Naive thymus-derived CD4-positive, alpha-beta T cell (primary cell): ENCODE measurements at regions of chr18 and their contacts with region 1.

Region 1: GRCh38 chr18:26090130-26091046 is at the start of gene SS18:
- DNase-seq: peak; percentile 79 to 90 (median 87)
- ATAC-seq: peak; percentile 91
- H3K4me3 ChIP-seq: peak within 1 kb of the TSS; percentile 95
- H3K4me3 Mint-ChIP-seq: peak within 1 kb of the TSS; percentile 94 to 99 (median 97)
- H3K27ac ChIP-seq: peak within 1 kb of the TSS; percentile 96
- H3K27ac Mint-ChIP-seq: peak within 1 kb of the TSS; percentile 95 to 99 (median 98)
- H3K4me1 ChIP-seq: peaks cover 9 to 13% of the 10 kb centered on the region in 2 donors
- H3K4me1 Mint-ChIP-seq: peaks cover 23 to 44% (median 38%) of the 10 kb centered on the region in 7 donors
- H3K27me3 ChIP-seq: no peaks in the 10 kb centered on the region
- H3K27me3 Mint-ChIP-seq: no peaks in the 10 kb centered on the region
- total RNA-seq, gene SS18: 50.9 to 85.8 (median 77.3) TPM

Region 2: GRCh38 chr18:24397694-24398365 is 1692.6 kb before region 1 on chr18 and contains the start of gene OSBPL1A:
- CTCF ChIA-PET with region 1: no interaction called
- POLR2A ChIA-PET with region 1: no interaction called
- intact Hi-C with region 1: loop called in 1 of 2 experiments (anchors 5 kb)
- DNase-seq: peak; percentile 50 to 68 (median 63)
- ATAC-seq: peak; percentile 95
- H3K4me3 ChIP-seq: peak within 1 kb of the TSS; percentile 71
- H3K4me3 Mint-ChIP-seq: peak within 1 kb of the TSS; percentile 82 to 91 (median 88)
- H3K27ac ChIP-seq: no peak within 1 kb of the TSS
- H3K27ac Mint-ChIP-seq: peak within 1 kb of the TSS in 6 of 9 donors; percentile 7 to 84 (median 33)
- H3K4me1 ChIP-seq: peaks cover 0 to 6% of the 10 kb centered on the region in 2 donors
- H3K4me1 Mint-ChIP-seq: peaks cover 0 to 24% (median 12%) of the 10 kb centered on the region in 7 donors
- H3K27me3 ChIP-seq: no peaks in the 10 kb centered on the region
- H3K27me3 Mint-ChIP-seq: peaks cover 5 to 40% (median 10%) of the 10 kb centered on the region in 5 donors
- total RNA-seq, gene OSBPL1A: 1.8 to 7.7 (median 4.3) TPM

Region 3: GRCh38 chr18:25112821-25113434 is 977.5 kb before region 1 on chr18:
- CTCF ChIA-PET with region 1: no interaction called
- POLR2A ChIA-PET with region 1: no interaction called
- intact Hi-C with region 1: no loop called
- DNase-seq: no peak
- ATAC-seq: no peak
- H3K4me3 ChIP-seq: no peak overlapping the region
- H3K4me3 Mint-ChIP-seq: no peak overlapping the region
- H3K27ac ChIP-seq: no peak overlapping the region
- H3K27ac Mint-ChIP-seq: no peak overlapping the region
- H3K4me1 ChIP-seq: no peaks in the 10 kb centered on the region
- H3K4me1 Mint-ChIP-seq: no peaks in the 10 kb centered on the region
- H3K27me3 ChIP-seq: no peaks in the 10 kb centered on the region
- H3K27me3 Mint-ChIP-seq: peaks cover 0 to 13% (median 0%) of the 10 kb centered on the region in 5 donors

Region 4: GRCh38 chr18:25946540-25946939 is 143.8 kb before region 1 on chr18:
- CTCF ChIA-PET with region 1: no interaction called
- POLR2A ChIA-PET with region 1: no interaction called
- intact Hi-C with region 1: no loop called
- DNase-seq: no peak
- ATAC-seq: no peak
- H3K4me3 ChIP-seq: no peak overlapping the region
- H3K4me3 Mint-ChIP-seq: no peak overlapping the region
- H3K27ac ChIP-seq: no peak overlapping the region
- H3K27ac Mint-ChIP-seq: no peak overlapping the region
- H3K4me1 ChIP-seq: no peaks in the 10 kb centered on the region
- H3K4me1 Mint-ChIP-seq: no peaks in the 10 kb centered on the region
- H3K27me3 ChIP-seq: no peaks in the 10 kb centered on the region
- H3K27me3 Mint-ChIP-seq: peaks cover 0 to 7% (median 4%) of the 10 kb centered on the region in 5 donors

Region 5: DNA sequence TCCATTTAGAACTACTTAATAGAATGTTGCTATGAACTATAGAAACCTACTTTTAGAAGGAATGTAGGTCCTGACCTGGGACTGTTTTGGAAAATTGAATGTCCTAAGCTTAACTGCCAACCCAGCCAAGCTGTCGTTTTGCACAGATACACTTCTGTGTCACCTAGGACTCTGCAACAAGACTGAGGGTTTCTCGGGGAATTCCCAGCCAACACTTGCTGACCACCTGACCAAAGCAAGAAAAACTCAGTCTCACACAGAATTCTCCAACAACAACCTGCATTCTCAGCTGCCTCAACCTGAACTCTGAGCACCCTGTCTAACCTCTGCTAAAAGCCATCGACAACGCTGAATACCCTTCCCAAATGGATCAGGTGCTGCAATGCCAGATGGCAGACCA is 128.2 kb before region 1 on chr18:
- CTCF ChIA-PET with region 1: no interaction called
- POLR2A ChIA-PET with region 1: no interaction called
- intact Hi-C with region 1: no loop called
- DNase-seq: no peak
- ATAC-seq: no peak
- H3K4me3 ChIP-seq: no peak overlapping the region
- H3K4me3 Mint-ChIP-seq: no peak overlapping the region
- H3K27ac ChIP-seq: no peak overlapping the region
- H3K27ac Mint-ChIP-seq: no peak overlapping the region
- H3K4me1 ChIP-seq: no peaks in the 10 kb centered on the region
- H3K4me1 Mint-ChIP-seq: peaks cover 0 to 1% (median 0%) of the 10 kb centered on the region in 7 donors
- H3K27me3 ChIP-seq: no peaks in the 10 kb centered on the region
- H3K27me3 Mint-ChIP-seq: peaks cover 12 to 23% (median 17%) of the 10 kb centered on the region in 5 donors

Region 6: GRCh38 chr18:26073758-26074157 is 16.6 kb before region 1 on chr18:
- CTCF ChIA-PET with region 1: no interaction called
- POLR2A ChIA-PET with region 1: no interaction called
- intact Hi-C with region 1: loop called (anchors 1 to 2 kb)
- DNase-seq: no peak
- ATAC-seq: no peak
- H3K4me3 ChIP-seq: no peak overlapping the region
- H3K4me3 Mint-ChIP-seq: no peak overlapping the region
- H3K27ac ChIP-seq: no peak overlapping the region
- H3K27ac Mint-ChIP-seq: no peak overlapping the region
- H3K4me1 ChIP-seq: no peaks in the 10 kb centered on the region
- H3K4me1 Mint-ChIP-seq: peaks cover 14 to 64% (median 40%) of the 10 kb centered on the region in 7 donors
- H3K27me3 ChIP-seq: no peaks in the 10 kb centered on the region
- H3K27me3 Mint-ChIP-seq: no peaks in the 10 kb centered on the region

Region 7: DNA sequence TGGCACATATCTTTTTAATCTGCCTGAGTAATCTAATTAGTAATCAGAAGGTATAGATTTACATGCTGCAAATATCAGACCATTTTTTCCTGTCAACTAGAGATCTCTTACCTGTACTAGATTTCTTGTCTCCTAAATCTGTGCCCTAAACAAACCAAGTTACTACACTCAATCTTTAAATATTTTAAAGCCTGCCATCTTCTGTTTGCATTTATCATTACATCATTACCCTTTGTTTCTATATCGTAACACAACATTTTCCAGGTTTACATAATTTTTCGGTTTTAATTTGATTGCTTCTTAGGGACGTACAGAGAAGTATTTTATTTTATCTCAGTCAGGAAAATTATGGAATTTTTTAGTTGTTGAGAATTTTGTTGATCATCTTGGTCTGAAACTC is 69.0 kb after region 1 on chr18:
- CTCF ChIA-PET with region 1: no interaction called
- POLR2A ChIA-PET with region 1: no interaction called
- intact Hi-C with region 1: loop called in 1 of 2 experiments (anchors 1 kb)
- DNase-seq: peak in 5 of 9 donors; percentile 7 to 37 (median 17)
- ATAC-seq: no peak
- H3K4me3 ChIP-seq: no peak overlapping the region
- H3K4me3 Mint-ChIP-seq: peak overlapping the region in 1 of 10 donors; percentile 2
- H3K27ac ChIP-seq: no peak overlapping the region
- H3K27ac Mint-ChIP-seq: no peak overlapping the region
- H3K4me1 ChIP-seq: no peaks in the 10 kb centered on the region
- H3K4me1 Mint-ChIP-seq: peaks cover 0 to 7% (median 2%) of the 10 kb centered on the region in 7 donors
- H3K27me3 ChIP-seq: no peaks in the 10 kb centered on the region
- H3K27me3 Mint-ChIP-seq: peaks cover 0 to 8% (median 0%) of the 10 kb centered on the region in 5 donors

Region 8: GRCh38 chr18:26215247-26215970 is 125.0 kb after region 1 on chr18:
- CTCF ChIA-PET with region 1: interaction called, 3 read pairs
- POLR2A ChIA-PET with region 1: interaction called, 5 read pairs
- intact Hi-C with region 1: loop called in 1 of 2 experiments (anchors 1 kb)
- DNase-seq: peak in 8 of 9 donors; percentile 25 to 93 (median 87)
- ATAC-seq: peak; percentile 98
- H3K4me3 ChIP-seq: no peak overlapping the region
- H3K4me3 Mint-ChIP-seq: peak overlapping the region; percentile 29 to 82 (median 60)
- H3K27ac ChIP-seq: peak overlapping the region; percentile 58
- H3K27ac Mint-ChIP-seq: peak overlapping the region; percentile 80 to 98 (median 91)
- H3K4me1 ChIP-seq: peaks cover 11 to 18% of the 10 kb centered on the region in 2 donors
- H3K4me1 Mint-ChIP-seq: peaks cover 19 to 50% (median 30%) of the 10 kb centered on the region in 7 donors
- H3K27me3 ChIP-seq: no peaks in the 10 kb centered on the region
- H3K27me3 Mint-ChIP-seq: no peaks in the 10 kb centered on the region

Region 9: GRCh38 chr18:26548429-26549262 is 458.3 kb after region 1 on chr18 and contains the start of gene KCTD1:
- CTCF ChIA-PET with region 1: no interaction called
- POLR2A ChIA-PET with region 1: no interaction called
- intact Hi-C with region 1: loop called (anchors 5 to 10 kb)
- DNase-seq: peak in 8 of 9 donors; percentile 26 to 73 (median 52)
- ATAC-seq: peak; percentile 70
- H3K4me3 ChIP-seq: peak within 1 kb of the TSS; percentile 53
- H3K4me3 Mint-ChIP-seq: peak within 1 kb of the TSS; percentile 75 to 92 (median 86)
- H3K27ac ChIP-seq: no peak within 1 kb of the TSS
- H3K27ac Mint-ChIP-seq: peak within 1 kb of the TSS in 1 of 9 donors; percentile 82
- H3K4me1 ChIP-seq: peaks cover 0 to 4% of the 10 kb centered on the region in 2 donors
- H3K4me1 Mint-ChIP-seq: peaks cover 12 to 50% (median 42%) of the 10 kb centered on the region in 7 donors
- H3K27me3 ChIP-seq: peaks cover 7 to 10% of the 10 kb centered on the region in 2 donors
- H3K27me3 Mint-ChIP-seq: peaks cover 26 to 45% (median 33%) of the 10 kb centered on the region in 5 donors
- total RNA-seq, gene KCTD1: 2.1 to 4.5 (median 2.6) TPM